CD4-positive, alpha-beta T cell (primary cell): ENCODE measurements at regions of chr1 and their contacts with region 1.

Region 1: GRCh38 chr1:22416555-22417454 is 34.8 kb upstream of the ZBTB40 start:
- DNase-seq: peak; percentile 53 to 83 (median 64)
- ATAC-seq: peak; percentile 90
- H3K4me3 ChIP-seq: no peak overlapping the region
- H3K4me3 Mint-ChIP-seq: no peak overlapping the region
- H3K27ac ChIP-seq: no peak overlapping the region
- H3K27ac Mint-ChIP-seq: no peak overlapping the region
- H3K4me1 ChIP-seq: peaks cover 7% of the 10 kb centered on the region
- H3K4me1 Mint-ChIP-seq: peaks cover 4% of the 10 kb centered on the region
- H3K27me3 ChIP-seq: peaks cover 13 to 33% of the 10 kb centered on the region in 2 experiments
- H3K27me3 Mint-ChIP-seq: peaks cover 60% of the 10 kb centered on the region
- CTCF ChIP-seq: peak; percentile 68

Region 2: GRCh38 chr1:22105611-22106207 is 311.1 kb before region 1 on chr1:
- CTCF ChIA-PET with region 1: no interaction called
- POLR2A ChIA-PET with region 1: no interaction called
- intact Hi-C with region 1: loop called (anchors 1 to 10 kb)
- DNase-seq: peak in 5 of 14 experiments; percentile 16 to 72 (median 61)
- ATAC-seq: peak; percentile 68
- H3K4me3 ChIP-seq: no peak overlapping the region
- H3K4me3 Mint-ChIP-seq: peak overlapping the region; percentile 64
- H3K27ac ChIP-seq: peak overlapping the region in 1 of 2 donors; percentile 8
- H3K27ac Mint-ChIP-seq: peak overlapping the region; percentile 77
- H3K4me1 ChIP-seq: peaks cover 43% of the 10 kb centered on the region
- H3K4me1 Mint-ChIP-seq: peaks cover 74% of the 10 kb centered on the region
- H3K27me3 ChIP-seq: no peaks in the 10 kb centered on the region
- H3K27me3 Mint-ChIP-seq: no peaks in the 10 kb centered on the region
- CTCF ChIP-seq: peak; percentile 85

Region 3: GRCh38 chr1:22131875-22132486 is 284.8 kb before region 1 on chr1:
- CTCF ChIA-PET with region 1: no interaction called
- POLR2A ChIA-PET with region 1: no interaction called
- intact Hi-C with region 1: loop called in 1 of 2 experiments (anchors 2 kb)
- DNase-seq: peak; percentile 20 to 72 (median 42)
- ATAC-seq: peak; percentile 49
- H3K4me3 ChIP-seq: no peak overlapping the region
- H3K4me3 Mint-ChIP-seq: no peak overlapping the region
- H3K27ac ChIP-seq: no peak overlapping the region
- H3K27ac Mint-ChIP-seq: no peak overlapping the region
- H3K4me1 ChIP-seq: peaks cover 3% of the 10 kb centered on the region
- H3K4me1 Mint-ChIP-seq: no peaks in the 10 kb centered on the region
- H3K27me3 ChIP-seq: no peaks in the 10 kb centered on the region
- H3K27me3 Mint-ChIP-seq: peaks cover 7% of the 10 kb centered on the region
- CTCF ChIP-seq: peak; percentile 66

Region 4: DNA sequence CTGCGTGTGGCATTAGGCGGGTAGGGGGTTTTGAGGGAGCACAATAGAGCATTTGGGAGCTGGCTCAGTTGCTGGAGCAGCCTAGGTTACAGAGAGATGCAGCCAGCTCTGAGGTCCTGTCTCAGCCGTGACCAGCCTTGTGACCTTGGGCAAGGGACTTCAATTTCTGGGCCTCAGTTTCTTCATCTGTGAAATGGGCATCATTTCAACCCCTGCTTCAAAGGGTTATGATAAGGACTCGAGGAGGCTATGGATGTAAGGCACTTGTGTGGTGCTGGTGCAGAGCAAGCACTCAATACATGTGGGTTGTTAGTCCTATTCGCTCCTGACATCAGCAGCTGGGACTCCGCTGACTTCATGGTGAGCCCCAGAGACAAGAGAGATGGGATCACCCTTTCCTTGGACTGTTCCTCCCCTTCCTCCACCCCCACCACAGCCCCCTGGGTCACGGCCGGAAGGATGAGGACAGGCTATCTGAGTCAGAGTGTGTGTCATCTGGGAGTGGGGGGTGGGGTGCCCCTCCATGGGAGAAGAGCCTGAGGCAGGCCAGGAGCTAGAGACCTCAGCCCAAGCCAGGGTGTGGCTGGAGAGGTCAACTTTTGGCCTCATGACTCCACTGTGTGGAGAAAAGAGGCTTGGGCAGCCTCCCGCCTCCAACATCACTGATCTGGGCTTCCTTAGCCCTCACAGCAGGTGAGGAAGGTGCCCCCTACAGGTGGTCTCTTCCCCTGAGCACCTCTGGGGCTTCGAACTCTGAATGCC is 36.6 kb before region 1 on chr1:
- CTCF ChIA-PET with region 1: no interaction called
- POLR2A ChIA-PET with region 1: no interaction called
- intact Hi-C with region 1: no loop called
- DNase-seq: no peak
- ATAC-seq: no peak
- H3K4me3 ChIP-seq: no peak overlapping the region
- H3K4me3 Mint-ChIP-seq: no peak overlapping the region
- H3K27ac ChIP-seq: no peak overlapping the region
- H3K27ac Mint-ChIP-seq: no peak overlapping the region
- H3K4me1 ChIP-seq: no peaks in the 10 kb centered on the region
- H3K4me1 Mint-ChIP-seq: no peaks in the 10 kb centered on the region
- H3K27me3 ChIP-seq: peaks cover 0 to 2% of the 10 kb centered on the region in 2 experiments
- H3K27me3 Mint-ChIP-seq: peaks cover 34% of the 10 kb centered on the region
- CTCF ChIP-seq: no peak

Region 5: DNA sequence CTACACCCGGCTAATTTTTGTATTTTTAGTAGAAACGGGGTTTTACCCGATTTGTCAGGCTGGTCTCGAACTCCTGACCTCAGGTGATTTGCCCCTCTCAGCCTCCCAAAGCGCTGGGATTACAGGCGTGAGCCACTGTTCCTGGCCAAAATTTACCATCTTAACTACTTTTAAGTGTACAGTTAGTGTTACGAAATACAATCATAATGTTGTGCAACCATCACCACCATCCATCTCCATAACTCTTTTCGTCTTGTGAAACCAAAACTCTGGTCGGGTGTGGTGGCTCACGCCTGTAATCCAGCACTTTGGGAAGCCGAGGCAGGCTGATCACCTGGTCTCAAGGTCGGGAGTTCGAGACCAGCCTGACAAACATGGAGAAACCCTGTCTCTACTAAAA is 20.8 kb after region 1 on chr1:
- CTCF ChIA-PET with region 1: no interaction called
- POLR2A ChIA-PET with region 1: no interaction called
- intact Hi-C with region 1: no loop called
- DNase-seq: no peak
- ATAC-seq: no peak
- H3K4me3 ChIP-seq: no peak overlapping the region
- H3K4me3 Mint-ChIP-seq: no peak overlapping the region
- H3K27ac ChIP-seq: no peak overlapping the region
- H3K27ac Mint-ChIP-seq: no peak overlapping the region
- H3K4me1 ChIP-seq: no peaks in the 10 kb centered on the region
- H3K4me1 Mint-ChIP-seq: no peaks in the 10 kb centered on the region
- H3K27me3 ChIP-seq: no peaks in the 10 kb centered on the region
- H3K27me3 Mint-ChIP-seq: peaks cover 51% of the 10 kb centered on the region
- CTCF ChIP-seq: no peak

Region 6: GRCh38 chr1:22518379-22518778 is 101.6 kb after region 1 on chr1:
- CTCF ChIA-PET with region 1: no interaction called
- POLR2A ChIA-PET with region 1: no interaction called
- intact Hi-C with region 1: no loop called
- DNase-seq: no peak
- ATAC-seq: no peak
- H3K4me3 ChIP-seq: no peak overlapping the region
- H3K4me3 Mint-ChIP-seq: no peak overlapping the region
- H3K27ac ChIP-seq: no peak overlapping the region
- H3K27ac Mint-ChIP-seq: no peak overlapping the region
- H3K4me1 ChIP-seq: no peaks in the 10 kb centered on the region
- H3K4me1 Mint-ChIP-seq: no peaks in the 10 kb centered on the region
- H3K27me3 ChIP-seq: no peaks in the 10 kb centered on the region
- H3K27me3 Mint-ChIP-seq: no peaks in the 10 kb centered on the region
- CTCF ChIP-seq: no peak

Region 7: DNA sequence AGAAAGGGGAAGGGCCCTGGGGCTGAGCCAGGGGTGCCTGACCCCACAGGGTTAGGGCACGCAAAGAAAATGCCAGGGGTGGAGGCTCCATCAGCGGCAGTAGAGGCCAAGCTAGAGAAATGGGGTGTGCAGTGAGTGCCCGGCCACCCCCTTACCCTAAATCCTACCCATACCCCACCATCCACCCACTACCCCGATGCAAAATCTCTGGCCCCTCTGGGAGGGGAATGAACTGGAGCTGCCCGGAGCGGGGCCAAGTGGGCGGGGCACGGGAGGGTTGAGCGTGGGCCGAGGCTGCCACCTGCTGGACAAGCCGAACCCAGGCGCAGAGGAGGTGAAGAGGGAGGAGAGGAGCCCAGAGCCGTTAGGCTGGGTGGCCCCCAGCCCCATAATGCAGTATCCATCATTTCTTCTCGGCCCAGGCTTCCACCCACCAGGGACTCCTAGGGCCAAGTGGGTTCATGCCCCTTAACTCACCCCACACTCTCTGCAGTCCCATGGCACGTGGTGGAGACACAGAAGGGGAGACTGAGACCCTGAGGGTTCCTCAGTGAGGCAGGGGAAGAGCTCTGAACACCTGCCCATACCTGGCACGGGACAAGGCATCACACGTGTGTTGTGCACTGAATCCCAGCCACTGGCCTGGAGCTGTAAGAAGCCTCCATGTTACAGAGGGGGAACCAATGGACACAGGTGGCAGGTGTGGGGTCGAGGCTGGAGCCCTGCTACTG is 225.3 kb after region 1 on chr1:
- CTCF ChIA-PET with region 1: interaction called, 7 read pairs
- POLR2A ChIA-PET with region 1: no interaction called
- intact Hi-C with region 1: loop called (anchors 1 kb)
- DNase-seq: peak; percentile 41 to 77 (median 60)
- ATAC-seq: peak; percentile 81
- H3K4me3 ChIP-seq: no peak overlapping the region
- H3K4me3 Mint-ChIP-seq: no peak overlapping the region
- H3K27ac ChIP-seq: no peak overlapping the region
- H3K27ac Mint-ChIP-seq: no peak overlapping the region
- H3K4me1 ChIP-seq: peaks cover 8% of the 10 kb centered on the region
- H3K4me1 Mint-ChIP-seq: no peaks in the 10 kb centered on the region
- H3K27me3 ChIP-seq: peaks cover 12 to 20% of the 10 kb centered on the region in 2 experiments
- H3K27me3 Mint-ChIP-seq: peaks cover 30% of the 10 kb centered on the region
- CTCF ChIP-seq: peak; percentile 74

Region 8: DNA sequence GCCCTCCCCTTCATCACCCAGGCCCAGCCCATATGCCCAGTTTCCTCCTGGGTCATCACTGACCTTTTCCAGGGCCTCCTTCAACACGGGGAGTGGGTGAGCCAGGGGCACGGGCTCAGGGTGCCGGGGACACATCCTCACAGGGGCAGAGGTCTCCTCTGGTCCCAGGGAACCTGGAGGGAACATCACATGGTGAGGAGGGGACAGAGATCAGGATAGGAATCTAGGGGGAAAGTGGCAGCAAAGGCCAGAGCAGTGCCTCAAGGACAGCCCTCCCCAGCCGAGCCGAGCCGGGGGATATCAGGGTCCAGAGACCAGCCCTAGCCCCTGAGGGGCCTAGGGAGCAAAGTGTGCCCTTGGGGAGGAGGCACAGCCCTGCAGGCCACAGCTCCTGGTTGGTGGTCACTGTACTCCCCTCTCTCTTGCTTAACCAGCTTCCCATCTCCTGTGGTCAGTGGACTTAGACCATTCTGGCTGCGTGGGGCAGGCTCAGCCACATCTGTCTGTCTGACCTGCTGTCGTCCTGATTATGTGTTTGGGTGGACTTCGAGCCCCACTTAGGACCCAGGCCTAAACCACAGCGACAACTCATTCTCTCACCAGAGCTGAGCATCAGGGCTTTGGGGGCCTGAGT is 546.4 kb after region 1 on chr1:
- CTCF ChIA-PET with region 1: no interaction called
- POLR2A ChIA-PET with region 1: no interaction called
- intact Hi-C with region 1: loop called in 1 of 2 experiments (anchors 5 kb)
- DNase-seq: no peak
- ATAC-seq: no peak
- H3K4me3 ChIP-seq: no peak overlapping the region
- H3K4me3 Mint-ChIP-seq: no peak overlapping the region
- H3K27ac ChIP-seq: no peak overlapping the region
- H3K27ac Mint-ChIP-seq: no peak overlapping the region
- H3K4me1 ChIP-seq: peaks cover 5% of the 10 kb centered on the region
- H3K4me1 Mint-ChIP-seq: no peaks in the 10 kb centered on the region
- H3K27me3 ChIP-seq: peaks cover 0 to 4% of the 10 kb centered on the region in 2 experiments
- H3K27me3 Mint-ChIP-seq: peaks cover 21% of the 10 kb centered on the region
- CTCF ChIP-seq: no peak